SK-N-SH (cell line): ENCODE measurements at regions of chr20 and their contacts with region 1.

Region 1: GRCh38 chr20:750801-751200 is 17.5 kb downstream of the SLC52A3 start:
- DNase-seq: no peak
- H3K4me3 ChIP-seq: no peak overlapping the region
- H3K27ac ChIP-seq: no peak overlapping the region
- H3K4me1 ChIP-seq: no peaks in the 10 kb centered on the region
- H3K27me3 ChIP-seq: no peaks in the 10 kb centered on the region; the same call in 1 of the 2 replicates
- CTCF ChIP-seq: no peak
- EP300 ChIP-seq: no peak
- RAD21 ChIP-seq: no peak

Region 2: DNA sequence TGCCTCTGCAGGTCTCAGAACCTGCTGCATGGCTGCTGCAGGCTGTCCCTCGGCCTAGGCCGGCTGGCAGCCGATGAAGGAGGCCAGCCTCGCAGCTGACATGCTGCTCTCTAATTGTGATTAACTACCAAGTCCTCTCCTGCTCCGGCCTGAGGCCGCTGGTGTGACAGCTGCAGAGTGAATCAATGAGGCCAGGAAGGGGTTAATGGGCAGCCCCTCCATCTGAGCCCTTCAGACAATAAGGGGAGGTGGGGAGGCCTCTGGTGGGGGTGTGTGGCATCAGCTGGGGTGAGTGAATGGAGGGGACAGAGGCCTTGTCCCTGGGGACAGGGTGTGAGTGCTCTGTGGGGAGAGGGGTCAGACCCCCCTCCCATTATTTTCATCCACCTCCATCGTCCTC is 16.9 kb before region 1 on chr20:
- CTCF ChIA-PET with region 1: interaction called, 14 read pairs
- POLR2A ChIA-PET with region 1: no interaction called
- DNase-seq: peak; percentile 41
- H3K4me3 ChIP-seq: no peak overlapping the region
- H3K27ac ChIP-seq: no peak overlapping the region
- H3K4me1 ChIP-seq: no peaks in the 10 kb centered on the region; a peak in 1 of 4 replicates
- H3K27me3 ChIP-seq: peaks cover 5% of the 10 kb centered on the region; the same call in 1 of the 2 replicates
- CTCF ChIP-seq: no peak
- EP300 ChIP-seq: no peak
- RAD21 ChIP-seq: no peak

Region 3: GRCh38 chr20:760751-761417 is 10.1 kb after region 1 on chr20:
- CTCF ChIA-PET with region 1: interaction called, 21 read pairs
- POLR2A ChIA-PET with region 1: no interaction called
- DNase-seq: peak; percentile 78
- H3K4me3 ChIP-seq: peak overlapping the region in 1 of 2 experiments; percentile 32; a peak in 1 of 4 replicates
- H3K27ac ChIP-seq: no peak overlapping the region
- H3K4me1 ChIP-seq: peaks cover 0 to 3% of the 10 kb centered on the region in 2 experiments; a peak in 1 of 4 replicates
- H3K27me3 ChIP-seq: peaks cover 13% of the 10 kb centered on the region; the same call in 1 of the 2 replicates
- CTCF ChIP-seq: peak; percentile 60
- EP300 ChIP-seq: no peak
- RAD21 ChIP-seq: no peak

Region 4: GRCh38 chr20:973785-974194 is 223.0 kb after region 1 on chr20:
- CTCF ChIA-PET with region 1: no interaction called
- POLR2A ChIA-PET with region 1: no interaction called
- DNase-seq: peak; percentile 55
- H3K4me3 ChIP-seq: no peak overlapping the region
- H3K27ac ChIP-seq: no peak overlapping the region
- H3K4me1 ChIP-seq: peaks cover 0 to 10% of the 10 kb centered on the region in 2 experiments; a peak in 1 of 4 replicates
- H3K27me3 ChIP-seq: peaks cover 5% of the 10 kb centered on the region; the same call in 1 of the 2 replicates
- CTCF ChIP-seq: peak; percentile 45
- EP300 ChIP-seq: no peak
- RAD21 ChIP-seq: peak; percentile 50